ENCODE measurements at regions of chr3 and their contacts with region 1.

Region 1: DNA sequence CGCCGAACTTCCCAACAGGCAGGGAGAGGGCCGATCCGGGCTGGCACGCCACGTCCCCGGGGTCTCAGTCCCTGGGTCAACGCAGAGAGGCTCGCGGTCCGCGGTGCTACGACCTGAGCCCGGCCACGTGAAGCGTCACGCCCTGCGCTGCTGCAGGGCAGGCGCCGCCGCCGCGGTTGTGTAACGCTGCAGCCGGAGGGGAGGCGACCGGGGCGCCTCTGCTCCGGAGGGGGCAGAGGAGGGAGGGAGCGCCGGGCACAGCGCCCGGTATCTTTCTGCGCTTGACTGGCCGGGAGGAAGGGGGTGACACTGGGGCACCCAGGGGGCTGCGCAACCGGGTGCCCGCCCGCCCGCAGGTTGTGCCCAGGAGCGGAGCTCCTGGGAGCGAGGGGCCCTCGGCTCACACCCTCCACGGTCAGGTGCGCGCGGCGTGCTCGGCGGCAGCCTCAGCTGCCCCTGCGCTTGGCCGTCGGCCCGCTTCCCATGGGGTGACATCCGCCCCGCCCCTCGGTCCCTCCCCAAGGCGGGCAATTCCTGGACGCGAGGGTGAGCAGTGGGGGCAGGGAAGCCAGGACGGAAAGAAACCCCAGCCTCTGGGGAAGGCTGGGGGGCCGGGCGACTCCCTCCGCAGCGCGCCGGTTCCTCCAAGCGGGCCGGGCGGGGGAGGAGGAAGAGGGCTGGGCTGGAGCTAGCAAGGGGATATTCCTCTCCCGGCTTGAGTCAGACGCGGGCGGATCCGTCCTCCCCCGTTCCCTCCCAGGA is 852 bp upstream of the BHLHE40 start:
- DNase-seq: peak; percentile 83
- CTCF ChIP-seq: no peak

Region 2: DNA sequence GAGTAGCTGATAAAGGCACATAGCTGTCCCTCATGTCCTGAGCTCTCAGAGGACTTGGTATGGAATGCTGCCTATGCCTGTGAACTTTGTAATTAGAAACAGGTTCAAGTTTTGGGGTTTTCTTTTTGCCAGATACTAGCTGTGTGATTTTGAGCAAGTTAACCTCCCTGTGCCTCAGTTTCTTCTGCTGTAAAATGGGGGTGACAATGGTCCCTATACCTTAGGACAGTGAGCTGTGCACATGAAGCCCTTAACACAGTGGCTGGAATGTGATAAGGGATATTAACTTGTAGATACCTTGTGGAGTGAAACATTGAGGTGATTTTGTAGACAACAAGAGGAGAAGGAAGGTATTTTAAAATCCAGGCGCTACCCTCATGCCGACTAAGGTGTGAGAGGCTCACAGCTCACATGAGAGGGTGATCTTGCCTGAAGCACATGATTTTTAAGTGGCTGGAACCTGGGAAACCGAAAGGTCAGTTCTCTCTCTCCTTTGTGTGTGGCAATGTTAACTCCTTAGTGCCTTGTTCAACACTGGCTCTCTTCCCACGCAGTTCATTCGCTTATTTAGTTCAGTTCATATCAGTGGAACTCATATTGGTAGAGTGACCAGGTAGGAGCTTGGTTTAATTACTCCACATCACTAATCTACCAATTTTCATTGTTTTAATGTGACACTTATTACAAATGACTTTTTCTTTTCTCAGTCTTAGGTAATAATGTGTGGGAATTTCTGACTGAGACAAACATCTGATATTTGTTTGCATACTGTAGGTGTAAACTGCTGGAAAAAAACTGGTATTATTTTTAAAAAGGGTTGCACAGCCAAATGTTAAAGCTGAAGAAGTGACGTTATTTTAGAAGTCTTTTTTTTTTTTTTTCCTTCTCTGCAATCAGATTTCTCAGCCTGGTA is 249.1 kb before region 1 on chr3:
- CTCF ChIA-PET with region 1: interaction called, 11 read pairs
- POLR2A ChIA-PET with region 1: interaction called, 8 read pairs
- DNase-seq: no peak
- CTCF ChIP-seq: no peak

Region 3: GRCh38 chr3:4834403-4834866 is 143.9 kb before region 1 on chr3:
- CTCF ChIA-PET with region 1: interaction called, 20 read pairs
- POLR2A ChIA-PET with region 1: interaction called, 6 read pairs
- DNase-seq: peak; percentile 61
- CTCF ChIP-seq: no peak

Region 4: DNA sequence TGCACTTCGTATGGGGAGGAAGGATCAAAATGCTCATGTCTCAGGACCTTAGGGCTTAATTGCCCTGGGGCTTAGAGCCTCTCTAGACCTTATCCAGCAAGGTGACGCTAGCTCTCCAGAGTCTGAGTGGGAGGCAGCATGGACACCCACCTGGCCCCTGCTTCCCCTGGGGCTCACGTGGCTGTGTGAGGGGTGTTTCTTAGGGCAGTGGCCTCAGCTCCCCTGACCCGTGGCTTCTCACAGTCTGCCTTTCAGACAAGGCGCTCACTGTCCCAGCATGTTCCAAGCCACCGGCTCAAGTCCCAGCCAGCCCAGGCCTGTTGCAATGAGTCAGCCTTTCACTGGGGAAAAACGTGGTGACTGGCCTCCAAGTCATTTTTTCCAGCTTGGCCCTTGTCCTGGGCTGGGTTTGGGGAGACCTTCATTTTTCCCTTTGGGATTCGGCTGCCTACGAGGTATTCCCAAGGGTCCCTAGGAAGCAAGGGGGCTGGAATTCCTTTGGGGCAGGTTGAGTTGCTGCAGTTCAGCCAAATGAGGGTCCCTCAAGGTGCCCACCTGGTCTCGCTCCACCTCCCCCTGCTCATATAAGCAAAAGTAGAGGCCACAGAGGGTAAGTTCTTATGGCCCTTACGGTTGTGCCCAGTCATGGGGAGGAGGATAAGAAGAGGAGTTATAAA is 16.6 kb after region 1 on chr3:
- CTCF ChIA-PET with region 1: interaction called, 26 read pairs
- POLR2A ChIA-PET with region 1: interaction called, 15 read pairs
- DNase-seq: no peak
- CTCF ChIP-seq: no peak

Region 5: DNA sequence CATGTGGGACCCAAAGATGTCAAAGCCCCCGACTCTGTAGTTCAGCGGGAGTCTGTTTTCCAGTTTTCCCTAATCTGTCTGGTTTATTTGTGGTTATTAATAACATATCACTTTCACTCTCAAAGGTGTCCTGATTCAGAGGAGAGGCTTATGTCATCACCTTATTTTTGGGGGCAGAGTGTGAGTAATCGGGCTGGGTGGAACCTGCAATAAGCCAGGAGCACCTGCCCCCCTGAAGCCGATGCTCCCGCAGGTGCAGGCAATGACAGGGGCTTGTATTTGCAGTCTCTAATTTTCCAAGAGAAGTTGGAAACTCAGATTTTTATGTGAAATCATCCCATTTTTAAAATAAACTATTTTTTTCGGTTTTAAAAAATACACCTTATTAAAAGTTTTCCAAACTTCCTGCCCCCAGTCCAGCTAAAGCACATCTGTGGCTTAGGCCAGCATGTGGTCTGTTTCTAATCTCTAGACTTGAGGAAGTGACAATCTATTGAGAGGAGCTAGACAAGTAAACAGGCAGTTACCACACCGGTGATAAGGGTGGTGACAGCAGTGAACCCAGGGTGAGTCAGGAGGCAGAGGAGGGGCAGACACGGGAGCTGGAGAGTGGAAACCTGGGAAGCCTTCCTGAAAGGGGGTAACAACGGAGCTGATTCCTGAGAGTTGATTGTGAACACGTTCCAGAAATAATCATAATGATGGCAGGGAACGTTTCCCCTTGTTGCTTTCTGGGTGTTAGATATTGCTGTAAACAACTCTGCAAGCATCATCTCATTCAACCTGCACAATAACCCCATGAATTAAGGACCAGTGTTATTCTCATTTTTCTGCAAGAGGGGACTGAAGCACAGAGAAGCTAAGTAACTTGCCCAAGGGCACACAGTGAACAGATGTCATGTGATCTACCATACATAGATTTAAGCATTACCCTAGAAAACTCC is 38.1 kb after region 1 on chr3:
- CTCF ChIA-PET with region 1: interaction called, 40 read pairs
- POLR2A ChIA-PET with region 1: interaction called, 8 read pairs
- DNase-seq: peak; percentile 54
- CTCF ChIP-seq: no peak

Region 6: GRCh38 chr3:5298453-5298852 is 320.1 kb after region 1 on chr3:
- CTCF ChIA-PET with region 1: no interaction called
- POLR2A ChIA-PET with region 1: no interaction called
- DNase-seq: peak; percentile 70
- CTCF ChIP-seq: no peak